Psoas muscle (tissue), 8 donors: ENCODE measurements at regions of chr10 and their contacts with region 1.

Region 1: DNA sequence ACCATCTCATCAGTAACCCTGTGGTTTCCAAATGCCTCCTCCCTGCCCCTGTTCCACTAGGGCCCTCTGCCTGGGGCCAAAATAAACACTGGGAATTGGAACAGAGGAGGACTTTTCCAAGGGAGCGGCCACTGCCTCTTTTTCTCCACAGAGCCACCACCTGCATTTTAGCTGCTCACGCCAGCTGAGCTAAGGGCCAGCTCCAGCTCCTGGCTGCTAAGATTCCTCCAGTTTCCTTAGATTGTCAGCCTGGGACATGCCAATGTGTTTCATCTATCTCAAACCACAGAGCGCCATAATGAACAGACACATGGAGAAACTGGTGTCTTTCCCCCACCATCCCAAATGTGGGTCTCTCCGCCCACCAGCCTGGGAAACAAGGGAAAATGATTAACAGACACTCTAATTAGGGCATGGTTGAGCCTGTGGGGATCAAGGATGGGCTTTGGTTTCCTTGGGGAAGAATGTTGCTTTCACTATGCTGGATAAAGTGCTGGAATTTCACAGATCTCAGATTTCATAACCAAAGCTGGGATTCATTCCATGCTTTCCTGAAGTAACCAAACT is 52.2 kb downstream of the ASB13 start:
- DNase-seq: peak in 1 of 2 donors; percentile 52
- ATAC-seq: no peak
- H3K4me3 ChIP-seq: no peak overlapping the region
- H3K27ac ChIP-seq: peak overlapping the region; percentile 10
- H3K4me1 ChIP-seq: peaks cover 35% of the 10 kb centered on the region
- H3K27me3 ChIP-seq: no peaks in the 10 kb centered on the region
- CTCF ChIP-seq: no peak

Region 2: DNA sequence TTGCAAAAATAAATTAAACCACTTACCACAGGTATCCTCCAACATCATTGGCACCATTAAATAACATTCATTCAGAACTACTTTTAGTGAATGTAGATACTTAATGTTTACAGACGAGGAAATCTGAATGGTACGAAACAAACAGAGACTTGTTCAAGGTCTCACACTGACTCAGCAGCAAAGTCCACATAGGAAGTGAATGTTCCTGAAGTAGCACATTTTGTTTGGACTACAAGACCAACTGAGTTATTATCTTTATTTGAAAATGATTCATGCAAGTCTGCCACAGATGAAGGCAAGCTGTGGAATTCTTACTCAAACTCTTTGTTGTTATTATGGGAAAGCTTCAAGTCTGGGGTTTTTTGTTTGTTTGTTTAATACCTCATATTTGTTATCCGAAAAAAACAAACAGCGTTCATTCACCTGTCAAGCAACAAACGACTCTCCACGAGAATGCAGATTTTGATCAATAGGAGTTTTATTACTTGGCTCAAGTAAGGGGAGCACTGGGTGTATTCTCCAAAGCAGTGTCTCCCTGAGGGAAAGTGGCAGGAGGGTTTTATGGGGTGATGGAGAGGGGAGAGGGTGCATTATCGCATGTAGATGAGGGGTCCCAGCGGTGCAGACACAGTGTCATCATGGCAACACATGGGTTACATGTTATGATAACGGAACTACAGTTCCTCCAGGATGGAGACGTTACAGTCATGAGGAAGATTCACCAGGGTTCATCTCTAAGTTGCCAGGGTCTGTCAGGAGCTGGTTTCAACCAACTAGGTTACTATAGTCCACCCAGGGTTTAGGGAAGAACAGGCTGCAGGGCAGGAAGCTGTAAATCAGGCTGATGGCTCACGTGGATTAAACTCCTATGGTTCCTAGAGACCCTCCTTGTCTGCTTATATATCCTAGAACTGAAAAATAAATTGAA is 936.0 kb before region 1 on chr10:
- intact Hi-C with region 1: no loop called
- DNase-seq: no peak
- ATAC-seq: peak; percentile 72 to 87 (median 74)
- H3K4me3 ChIP-seq: no peak overlapping the region
- H3K27ac ChIP-seq: peak overlapping the region; percentile 87
- H3K4me1 ChIP-seq: peaks cover 23% of the 10 kb centered on the region
- H3K27me3 ChIP-seq: no peaks in the 10 kb centered on the region
- CTCF ChIP-seq: no peak

Region 3: GRCh38 chr10:5385224-5385623 is 229.0 kb before region 1 on chr10:
- intact Hi-C with region 1: no loop called
- DNase-seq: no peak
- ATAC-seq: no peak
- H3K4me3 ChIP-seq: no peak overlapping the region
- H3K27ac ChIP-seq: no peak overlapping the region
- H3K4me1 ChIP-seq: no peaks in the 10 kb centered on the region
- H3K27me3 ChIP-seq: no peaks in the 10 kb centered on the region
- CTCF ChIP-seq: no peak

Region 4: DNA sequence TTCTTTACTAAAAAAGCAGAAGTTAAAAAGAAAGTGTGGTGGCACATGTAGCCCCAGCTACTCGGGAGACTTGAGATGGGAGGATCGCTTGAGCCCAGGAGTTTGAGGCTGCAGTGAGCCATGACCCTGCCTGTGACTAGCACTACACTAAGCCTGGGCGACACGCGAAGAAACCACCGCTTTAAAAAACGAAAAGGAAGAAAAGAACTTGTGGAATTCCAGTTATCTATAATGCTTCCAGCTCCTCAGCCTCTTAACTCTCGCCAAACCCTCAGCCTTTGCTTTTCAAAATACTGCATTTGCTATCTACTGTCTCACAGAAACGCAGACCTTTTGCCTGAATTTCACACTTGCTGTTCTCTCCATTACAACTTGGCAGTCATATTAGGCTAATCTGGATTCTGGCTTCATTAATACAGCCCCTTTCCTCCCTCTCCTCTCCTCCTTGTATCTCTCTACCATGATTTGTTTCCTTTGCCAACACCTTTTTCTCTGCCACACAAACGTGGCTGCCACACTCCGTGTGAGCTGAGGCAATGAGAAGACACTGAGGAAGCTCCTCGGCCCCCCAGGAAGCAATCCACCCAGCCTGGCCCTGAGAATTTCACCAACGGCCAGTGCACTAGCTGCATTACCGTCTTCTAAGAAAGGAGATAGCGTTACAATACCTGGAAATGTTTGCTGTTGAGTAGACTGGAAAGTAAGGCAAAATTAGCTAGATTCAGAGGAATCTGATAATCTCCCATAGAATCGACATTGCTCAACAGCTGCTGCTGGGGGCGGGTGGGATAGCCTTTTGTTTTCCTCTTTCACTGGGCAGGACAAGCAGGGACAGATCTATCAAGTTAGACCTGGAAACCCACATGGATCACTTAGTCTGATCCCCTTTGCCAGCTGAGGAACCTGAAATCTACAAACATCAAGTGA is 152.1 kb before region 1 on chr10:
- intact Hi-C with region 1: loop called in 1 of 2 experiments (anchors 5 kb)
- DNase-seq: no peak
- ATAC-seq: peak in 2 of 4 donors; percentile 36 to 48
- H3K4me3 ChIP-seq: no peak overlapping the region
- H3K27ac ChIP-seq: no peak overlapping the region
- H3K4me1 ChIP-seq: no peaks in the 10 kb centered on the region
- H3K27me3 ChIP-seq: no peaks in the 10 kb centered on the region
- CTCF ChIP-seq: no peak